Activated T-helper 1 cell treated with anti-CD3 and anti-CD28 coated beads, Interleukin-12 subunit alpha, Interleukin-12 subunit beta, Interleukin-2, Interleukin-4 antibody, amounts not matched to agents 30 ng/mL and 10 ng/mL and 1 ng/mL, durations not matched to agents 14 hours and 24 hours and 36 hours (primary cell): ENCODE measurements at regions of chr9 and their contacts with region 1.

Region 1: GRCh38 chr9:125706661-125707471 is at the start of gene MAPKAP1:
- DNase-seq: peak; percentile 93
- H3K4me3 Mint-ChIP-seq: peak within 1 kb of the TSS; percentile 79
- H3K27ac Mint-ChIP-seq: peak within 1 kb of the TSS; percentile 77
- H3K4me1 Mint-ChIP-seq: peaks cover 34% of the 10 kb centered on the region
- H3K27me3 Mint-ChIP-seq: no peaks in the 10 kb centered on the region
- total RNA-seq, gene MAPKAP1: 103 and 108 TPM in 2 replicates

Region 2: DNA sequence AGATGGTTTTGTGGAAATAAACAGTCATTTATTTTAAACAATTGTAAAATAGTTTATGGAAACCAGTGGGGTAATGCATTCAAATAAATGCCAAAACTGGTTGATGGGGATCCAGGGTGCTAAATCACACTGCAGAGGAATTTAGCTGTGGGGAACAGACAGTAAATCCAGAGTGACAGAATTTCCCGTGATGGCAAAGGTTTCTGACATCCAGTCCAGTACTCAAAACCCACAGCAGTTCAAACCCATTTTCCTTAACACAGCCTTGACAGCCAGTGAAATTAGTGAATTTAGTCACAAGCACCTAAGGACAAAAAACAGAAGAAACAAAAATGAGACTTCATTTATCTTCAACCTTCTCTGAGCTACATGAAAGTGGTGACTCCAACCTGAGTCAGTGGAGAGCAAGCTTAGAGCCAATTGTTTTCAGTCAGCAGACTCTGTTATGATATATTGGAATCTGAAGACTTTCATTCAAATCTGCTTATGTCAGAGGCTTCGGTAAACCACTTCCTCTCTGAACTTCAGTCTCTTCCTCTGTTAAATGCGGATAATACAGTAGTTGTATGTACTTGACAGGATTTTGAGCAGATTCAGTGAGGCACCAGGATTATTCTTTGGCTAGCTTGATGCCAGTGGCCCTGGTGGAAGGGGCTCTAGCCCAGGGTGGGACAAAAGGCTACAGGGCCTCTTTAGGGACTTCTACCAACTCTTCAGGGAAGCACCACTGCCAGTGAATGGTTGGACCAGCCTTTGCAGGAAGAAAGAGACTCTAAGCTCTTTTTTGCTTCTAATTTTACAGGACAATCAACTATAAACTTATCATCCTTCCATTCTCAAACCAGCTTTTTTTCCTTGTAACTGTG is 185.2 kb before region 1 on chr9:
- intact Hi-C with region 1: loop called (anchors 1 kb)
- DNase-seq: peak; percentile 38
- H3K4me3 Mint-ChIP-seq: peak overlapping the region; percentile 61
- H3K27ac Mint-ChIP-seq: peak overlapping the region; percentile 91
- H3K4me1 Mint-ChIP-seq: peaks cover 33% of the 10 kb centered on the region
- H3K27me3 Mint-ChIP-seq: no peaks in the 10 kb centered on the region

Region 3: GRCh38 chr9:125558453-125559092 is 148.3 kb before region 1 on chr9:
- intact Hi-C with region 1: loop called (anchors 2 kb)
- DNase-seq: peak; percentile 31
- H3K4me3 Mint-ChIP-seq: no peak overlapping the region
- H3K27ac Mint-ChIP-seq: no peak overlapping the region
- H3K4me1 Mint-ChIP-seq: peaks cover 18% of the 10 kb centered on the region
- H3K27me3 Mint-ChIP-seq: no peaks in the 10 kb centered on the region

Region 4: DNA sequence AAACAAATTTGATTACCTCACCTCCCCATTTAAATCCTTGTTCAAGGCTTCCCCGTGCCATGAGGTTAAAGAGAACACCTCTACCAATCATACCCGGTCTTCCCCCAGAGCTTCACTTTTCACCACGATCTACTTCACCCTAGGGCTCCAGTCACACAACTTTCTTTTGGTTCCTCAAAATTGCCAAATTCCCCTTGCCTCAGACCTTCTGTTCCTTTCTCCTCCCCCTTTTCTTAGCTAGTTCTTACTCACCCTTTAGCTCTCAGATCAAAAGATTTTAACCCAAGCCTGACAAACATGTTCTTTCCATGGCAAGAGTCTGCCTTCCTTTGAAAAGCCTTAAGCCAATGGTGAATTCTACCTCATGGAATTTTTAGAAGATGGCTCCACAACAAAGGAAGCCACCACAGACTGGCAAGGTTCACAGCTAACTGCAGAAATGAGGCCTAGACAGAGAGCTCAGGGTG is 56.6 kb before region 1 on chr9:
- intact Hi-C with region 1: loop called (anchors 1 kb)
- DNase-seq: no peak
- H3K4me3 Mint-ChIP-seq: peak overlapping the region; percentile 54
- H3K27ac Mint-ChIP-seq: peak overlapping the region; percentile 85
- H3K4me1 Mint-ChIP-seq: peaks cover 71% of the 10 kb centered on the region
- H3K27me3 Mint-ChIP-seq: no peaks in the 10 kb centered on the region

Region 5: GRCh38 chr9:125694478-125694877 is 12.4 kb before region 1 on chr9:
- intact Hi-C with region 1: no loop called
- DNase-seq: no peak
- H3K4me3 Mint-ChIP-seq: no peak overlapping the region
- H3K27ac Mint-ChIP-seq: no peak overlapping the region
- H3K4me1 Mint-ChIP-seq: peaks cover 14% of the 10 kb centered on the region
- H3K27me3 Mint-ChIP-seq: no peaks in the 10 kb centered on the region

Region 6: GRCh38 chr9:126173401-126173800 is 466.5 kb after region 1 on chr9:
- intact Hi-C with region 1: no loop called
- DNase-seq: no peak
- H3K4me3 Mint-ChIP-seq: no peak overlapping the region
- H3K27ac Mint-ChIP-seq: no peak overlapping the region
- H3K4me1 Mint-ChIP-seq: no peaks in the 10 kb centered on the region
- H3K27me3 Mint-ChIP-seq: peaks cover 6% of the 10 kb centered on the region